Heart left ventricle (tissue), 16 donors: ENCODE measurements at regions of chr4 and their contacts with region 1.

Region 1: GRCh38 chr4:124111922-124112321 is 600.6 kb downstream of the ANKRD50 start:
- DNase-seq: peak in 1 of 5 donors; percentile 41
- ATAC-seq: peak; percentile 78 to 96 (median 87)
- H3K4me3 ChIP-seq: no peak overlapping the region
- H3K27ac ChIP-seq: peak overlapping the region in 6 of 12 donors; percentile 19 to 54 (median 32)
- H3K4me1 ChIP-seq: peaks cover 0 to 18% (median 6%) of the 10 kb centered on the region in 12 donors
- H3K27me3 ChIP-seq: no peaks in the 10 kb centered on the region
- CTCF ChIP-seq: peak; percentile 54 to 85 (median 78)
- POLR2A ChIP-seq: no peak

Region 2: GRCh38 chr4:123127218-123127617 is 984.7 kb before region 1 on chr4:
- intact Hi-C with region 1: loop called in 5 of 10 experiments (anchors 2 to 5 kb)
- DNase-seq: no peak
- ATAC-seq: peak in 2 of 4 donors; percentile 49 to 63
- H3K4me3 ChIP-seq: no peak overlapping the region
- H3K27ac ChIP-seq: peak overlapping the region in 2 of 12 donors; percentile 25 to 48
- H3K4me1 ChIP-seq: peaks cover 0 to 12% (median 5%) of the 10 kb centered on the region in 12 donors
- H3K27me3 ChIP-seq: no peaks in the 10 kb centered on the region
- CTCF ChIP-seq: peak in 10 of 12 donors; percentile 24 to 70 (median 52)
- POLR2A ChIP-seq: no peak

Region 3: DNA sequence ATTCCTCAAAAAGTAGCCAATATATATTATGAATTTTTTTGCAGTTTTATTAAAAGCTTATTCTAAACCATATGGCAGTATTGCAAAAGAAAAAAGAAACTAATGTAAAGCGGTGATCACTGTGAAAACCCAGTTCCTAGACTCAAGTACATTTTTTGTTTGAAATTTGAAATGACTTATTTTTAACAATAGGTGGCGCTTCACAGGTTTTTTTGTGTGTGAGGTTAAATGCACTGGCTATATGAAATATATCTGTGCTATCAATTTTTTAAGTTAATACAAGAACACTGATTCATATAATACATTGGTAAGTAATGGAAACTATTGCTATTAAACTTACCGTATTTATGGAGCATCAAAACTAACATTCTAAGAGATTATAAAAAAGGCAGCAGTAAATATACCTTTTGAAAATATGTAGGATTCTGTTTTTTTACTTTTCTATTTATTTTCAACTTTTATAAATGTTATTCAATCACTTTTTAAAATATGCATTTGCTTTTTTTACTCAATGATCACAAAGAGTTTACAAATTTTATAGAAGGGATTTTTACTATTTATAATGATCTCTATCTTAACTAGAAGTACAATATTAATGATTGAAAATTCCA is 721.0 kb before region 1 on chr4:
- intact Hi-C with region 1: loop called in 8 of 10 experiments (anchors 5 to 10 kb)
- DNase-seq: no peak
- ATAC-seq: no peak
- H3K4me3 ChIP-seq: no peak overlapping the region
- H3K27ac ChIP-seq: no peak overlapping the region
- H3K4me1 ChIP-seq: peaks cover 0 to 21% (median 10%) of the 10 kb centered on the region in 12 donors
- H3K27me3 ChIP-seq: no peaks in the 10 kb centered on the region
- CTCF ChIP-seq: peak; percentile 22 to 70 (median 51)
- POLR2A ChIP-seq: no peak

Region 4: DNA sequence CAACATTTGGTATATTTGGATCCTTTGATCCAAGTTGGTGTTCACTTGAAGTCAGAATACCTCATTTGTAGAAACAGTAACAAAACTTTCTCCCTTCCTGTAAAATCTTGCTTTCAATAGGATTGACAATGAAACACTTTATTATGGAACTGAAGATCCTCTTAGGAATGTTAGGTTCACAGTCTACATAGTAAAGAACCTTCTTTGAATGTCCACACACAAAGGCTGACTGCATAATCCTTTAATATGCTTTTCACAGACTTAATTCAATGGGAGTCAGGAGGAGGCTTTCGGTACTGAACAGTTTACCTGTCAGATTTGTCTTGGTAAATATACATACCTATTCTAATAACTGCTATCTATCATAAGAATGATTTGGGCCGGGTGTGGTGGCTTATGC is 526.8 kb before region 1 on chr4:
- intact Hi-C with region 1: no loop called
- DNase-seq: no peak
- ATAC-seq: no peak
- H3K4me3 ChIP-seq: no peak overlapping the region
- H3K27ac ChIP-seq: no peak overlapping the region
- H3K4me1 ChIP-seq: peaks cover 0 to 21% (median 2%) of the 10 kb centered on the region in 12 donors
- H3K27me3 ChIP-seq: no peaks in the 10 kb centered on the region
- CTCF ChIP-seq: no peak
- POLR2A ChIP-seq: no peak

Region 5: DNA sequence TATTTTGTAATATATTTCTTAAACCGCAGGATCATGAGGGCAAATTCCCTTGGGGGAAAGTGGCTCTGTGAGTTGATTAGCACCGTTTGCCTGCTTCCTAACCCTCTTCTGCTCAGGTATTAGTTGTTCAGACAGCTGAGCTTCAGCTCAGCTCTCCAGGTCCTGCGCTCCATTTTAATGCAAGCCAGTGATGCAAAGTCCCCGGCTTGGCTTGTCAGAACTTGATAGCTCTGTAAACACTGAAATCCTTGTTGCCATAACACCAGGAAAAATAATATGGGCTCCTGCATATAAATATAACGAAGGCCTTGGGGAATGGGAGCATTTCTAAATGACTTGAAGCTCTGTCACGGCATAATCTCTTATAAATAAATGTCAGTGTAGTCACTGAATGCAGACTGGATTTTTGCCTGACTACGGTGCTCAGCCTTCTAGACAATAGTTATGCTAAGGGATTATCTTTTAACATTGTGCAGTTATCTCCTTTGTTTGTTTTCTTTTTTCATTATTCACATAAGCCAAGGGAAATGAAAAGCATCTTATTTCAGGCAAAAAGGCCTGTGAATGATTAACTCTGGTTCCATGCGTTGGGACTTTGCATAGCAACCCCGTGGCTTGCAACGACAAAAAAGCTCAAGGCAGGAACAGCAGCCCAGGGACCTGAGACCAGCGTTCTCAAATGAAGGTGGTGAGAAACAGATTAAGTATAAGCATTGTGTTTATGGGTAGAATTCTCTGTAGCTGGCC is 462.1 kb before region 1 on chr4:
- intact Hi-C with region 1: loop called in 2 of 10 experiments (anchors 10 kb)
- DNase-seq: peak in 3 of 5 donors; percentile 22 to 40 (median 40)
- ATAC-seq: peak; percentile 44 to 78 (median 68)
- H3K4me3 ChIP-seq: peak overlapping the region in 5 of 12 donors; percentile 6 to 28 (median 20)
- H3K27ac ChIP-seq: peak overlapping the region; percentile 3 to 82 (median 56)
- H3K4me1 ChIP-seq: peaks cover 0 to 47% (median 11%) of the 10 kb centered on the region in 12 donors
- H3K27me3 ChIP-seq: no peaks in the 10 kb centered on the region
- CTCF ChIP-seq: no peak
- POLR2A ChIP-seq: no peak

Region 6: GRCh38 chr4:123776254-123776653 is 335.7 kb before region 1 on chr4:
- intact Hi-C with region 1: loop called (anchors 1 to 10 kb)
- DNase-seq: no peak
- ATAC-seq: no peak
- H3K4me3 ChIP-seq: no peak overlapping the region
- H3K27ac ChIP-seq: peak overlapping the region in 3 of 12 donors; percentile 41 to 73 (median 45)
- H3K4me1 ChIP-seq: peaks cover 0 to 21% (median 8%) of the 10 kb centered on the region in 12 donors
- H3K27me3 ChIP-seq: no peaks in the 10 kb centered on the region
- CTCF ChIP-seq: no peak
- POLR2A ChIP-seq: no peak